Posterior cingulate gyrus (tissue), 11 donors: ENCODE measurements at regions of chr1 and their contacts with region 1.

Region 1: DNA sequence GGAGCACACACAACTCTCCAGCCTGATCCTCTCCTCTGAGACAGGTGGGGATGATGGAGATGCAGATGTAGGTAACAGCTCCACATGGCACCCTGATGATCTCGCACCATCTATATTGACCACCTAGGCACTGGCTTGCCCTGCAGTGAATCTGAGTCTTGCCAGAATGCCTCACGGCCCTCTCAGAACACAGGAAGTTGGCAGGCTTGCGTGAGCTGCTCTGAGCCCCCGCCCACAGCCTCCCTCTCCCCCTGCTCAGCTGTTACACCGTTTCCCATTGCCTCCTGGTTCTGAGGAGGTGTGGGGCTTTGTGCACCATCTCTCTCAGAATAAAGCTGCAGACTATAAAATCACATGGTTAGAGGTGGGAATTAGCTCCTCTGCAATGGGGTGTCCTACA is 48.0 kb downstream of the URB2 start:
- DNase-seq: no peak

Region 2: GRCh38 chr1:229558571-229559335 is 115.3 kb before region 1 on chr1 and contains the start of gene ABCB10:
- intact Hi-C with region 1: no loop called
- DNase-seq: peak; percentile 92 to 99 (median 94)

Region 3: DNA sequence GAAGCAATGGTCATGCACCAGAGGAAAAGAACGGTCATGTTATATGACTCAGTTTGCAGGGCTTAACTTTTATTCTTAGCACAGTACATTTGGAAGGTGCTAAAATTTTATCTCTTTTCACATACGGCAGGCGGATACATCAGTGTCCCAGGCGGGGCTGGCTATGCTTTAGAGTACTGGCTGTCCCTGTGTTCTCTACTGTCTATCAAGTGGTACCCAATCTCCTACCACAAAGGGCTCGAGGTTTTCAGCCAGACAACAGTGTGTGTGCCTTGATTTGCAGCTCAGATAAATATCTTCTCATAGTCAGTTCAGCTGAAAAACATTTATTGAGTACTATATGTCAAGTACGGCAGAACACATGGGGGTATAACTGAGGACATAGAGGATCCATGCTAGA is 17.3 kb after region 1 on chr1:
- intact Hi-C with region 1: loop called (anchors 2 kb)
- DNase-seq: peak in 1 of 10 donors; percentile 61